ENCODE measurements at regions of chr22 and their contacts with region 1.

Region 1: GRCh38 chr22:17891481-17892167 is 117.4 kb upstream of the BID start:
- DNase-seq: no peak
- ATAC-seq: peak; percentile 74
- H3K4me3 ChIP-seq: no peak overlapping the region
- H3K27ac ChIP-seq: peak overlapping the region in 1 of 2 donors; percentile 52
- H3K4me1 ChIP-seq: peaks cover 0 to 6% of the 10 kb centered on the region in 2 donors
- H3K27me3 ChIP-seq: no peaks in the 10 kb centered on the region

Region 2: GRCh38 chr22:17678872-17679271 is 212.8 kb before region 1 on chr22:
- intact Hi-C with region 1: no loop called
- DNase-seq: no peak
- ATAC-seq: no peak
- H3K4me3 ChIP-seq: no peak overlapping the region
- H3K27ac ChIP-seq: no peak overlapping the region
- H3K4me1 ChIP-seq: no peaks in the 10 kb centered on the region
- H3K27me3 ChIP-seq: no peaks in the 10 kb centered on the region

Region 3: DNA sequence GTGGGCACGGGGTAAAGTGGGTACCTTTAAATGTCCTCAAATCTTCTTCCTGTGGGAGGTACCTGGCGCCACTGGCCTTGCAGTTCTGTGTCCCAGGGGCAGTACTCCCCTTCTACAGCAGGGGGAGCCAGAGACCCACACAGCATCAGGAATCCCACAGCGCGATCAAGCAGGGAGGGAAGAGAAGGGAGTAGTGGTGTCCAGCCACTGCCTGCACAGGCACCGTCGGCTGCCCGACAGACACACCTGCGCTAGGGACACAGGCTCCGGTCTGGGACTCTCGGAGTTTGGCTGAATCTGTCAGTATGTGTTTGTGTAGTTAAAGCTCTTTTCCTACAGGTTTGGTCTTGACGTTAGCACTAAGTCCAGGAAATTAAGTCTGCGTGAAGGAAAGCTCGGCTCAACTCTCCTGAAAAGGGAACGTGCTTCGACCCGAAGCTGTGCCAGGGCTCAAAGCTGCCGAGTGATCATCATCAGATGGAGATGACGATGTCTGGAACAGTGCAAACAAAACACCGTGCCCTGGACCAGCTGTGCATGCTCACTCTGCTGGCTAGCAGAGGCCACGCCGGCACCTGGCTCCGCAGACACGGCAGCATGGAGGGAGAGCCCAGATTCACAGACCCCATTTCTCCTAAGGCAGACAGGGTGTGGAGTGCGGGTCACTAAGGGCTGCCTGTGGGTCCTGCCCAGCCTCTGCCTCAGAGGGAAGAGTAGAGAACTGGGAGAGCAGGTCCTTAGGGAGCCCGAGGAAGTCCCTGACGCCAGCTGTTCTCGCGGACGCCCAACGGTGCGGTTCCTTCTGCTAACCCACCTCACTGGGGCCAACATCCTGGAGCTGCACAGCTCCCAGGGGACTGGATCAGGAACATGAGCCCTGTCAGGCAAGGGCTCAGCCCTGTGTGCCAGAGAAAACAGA is 61.3 kb before region 1 on chr22:
- intact Hi-C with region 1: loop called (anchors 5 kb)
- DNase-seq: peak; percentile 84 to 93
- ATAC-seq: peak; percentile 94
- H3K4me3 ChIP-seq: no peak overlapping the region
- H3K27ac ChIP-seq: peak overlapping the region in 1 of 2 donors; percentile 10
- H3K4me1 ChIP-seq: no peaks in the 10 kb centered on the region
- H3K27me3 ChIP-seq: no peaks in the 10 kb centered on the region

Region 4: GRCh38 chr22:17867160-17867785 is 24.4 kb before region 1 on chr22:
- intact Hi-C with region 1: no loop called
- DNase-seq: peak in 1 of 2 donors; percentile 51
- ATAC-seq: no peak
- H3K4me3 ChIP-seq: no peak overlapping the region
- H3K27ac ChIP-seq: no peak overlapping the region
- H3K4me1 ChIP-seq: no peaks in the 10 kb centered on the region
- H3K27me3 ChIP-seq: no peaks in the 10 kb centered on the region

Measured in aorta (tissue), 5 donors.